Activated CD4-positive, alpha-beta T cell treated with anti-CD3 and anti-CD28 coated beads for 36 hours (primary cell): ENCODE measurements at regions of chr16 and their contacts with region 1.

Region 1: DNA sequence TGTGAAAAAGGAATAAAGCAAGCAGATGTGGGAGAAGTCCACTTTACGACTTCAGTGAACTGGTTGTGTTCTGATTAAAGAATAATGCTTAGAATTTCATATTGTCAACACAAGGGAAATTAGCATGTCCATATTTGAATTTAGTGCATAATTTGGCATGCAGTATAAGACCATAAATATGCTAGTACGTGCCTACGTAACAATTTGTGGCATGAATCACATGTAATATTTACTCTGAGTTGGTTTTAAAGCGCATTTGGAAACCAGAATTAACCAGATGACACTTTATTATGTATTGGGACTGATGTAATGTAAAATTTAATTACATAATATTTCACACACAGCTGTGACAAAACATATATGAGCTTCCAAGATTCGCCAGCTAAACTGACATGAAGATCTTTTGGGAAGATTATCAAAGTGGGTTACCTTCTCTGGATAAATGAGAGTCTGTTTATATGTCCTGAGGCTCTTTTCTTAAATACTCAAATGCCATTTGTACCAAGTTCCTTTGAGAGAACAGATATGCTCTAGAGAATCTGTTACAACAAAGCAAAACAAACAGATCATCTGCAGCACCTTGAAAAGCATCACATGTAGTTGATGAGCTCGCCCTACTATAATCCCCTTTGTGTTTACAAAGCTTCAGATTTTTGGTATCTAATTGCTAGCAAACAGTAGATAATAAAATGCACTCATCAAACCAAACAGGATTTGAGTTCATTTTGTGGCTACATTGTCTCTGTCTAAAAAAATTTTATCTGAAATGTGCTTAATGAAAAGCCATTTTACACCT is 1468.6 kb downstream of the CDH11 start:
- DNase-seq: no peak
- ATAC-seq: no peak
- H3K4me3 Mint-ChIP-seq: no peak overlapping the region
- H3K27ac Mint-ChIP-seq: no peak overlapping the region
- H3K4me1 Mint-ChIP-seq: no peaks in the 10 kb centered on the region
- H3K27me3 Mint-ChIP-seq: no peaks in the 10 kb centered on the region

Region 2: DNA sequence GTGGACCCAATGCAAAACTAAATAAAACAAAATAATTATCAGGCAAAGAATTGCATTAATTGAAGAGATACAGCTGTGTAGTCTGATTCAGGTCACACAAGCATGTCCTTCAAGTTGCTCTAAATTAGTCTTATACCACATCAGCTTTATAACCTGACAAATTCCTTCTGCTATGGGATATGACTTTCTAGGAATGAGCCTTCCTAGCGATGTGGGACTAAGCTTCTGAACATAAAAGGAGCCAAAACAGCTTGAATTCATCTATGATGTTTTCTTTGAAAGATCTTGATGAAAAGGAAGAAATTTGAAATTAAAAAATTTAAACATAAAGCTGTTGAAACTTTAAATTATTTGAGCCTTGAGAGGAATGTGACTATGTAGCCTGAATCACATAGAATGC is 59.5 kb after region 1 on chr16:
- CTCF ChIA-PET with region 1: no interaction called
- POLR2A ChIA-PET with region 1: no interaction called
- intact Hi-C with region 1: loop called in 1 of 2 experiments (anchors 2 kb)
- DNase-seq: no peak
- ATAC-seq: no peak
- H3K4me3 Mint-ChIP-seq: no peak overlapping the region
- H3K27ac Mint-ChIP-seq: no peak overlapping the region
- H3K4me1 Mint-ChIP-seq: no peaks in the 10 kb centered on the region
- H3K27me3 Mint-ChIP-seq: no peaks in the 10 kb centered on the region